CD4-positive, alpha-beta T cell (primary cell): ENCODE measurements at regions of chrX and their contacts with region 1.

Region 1: DNA sequence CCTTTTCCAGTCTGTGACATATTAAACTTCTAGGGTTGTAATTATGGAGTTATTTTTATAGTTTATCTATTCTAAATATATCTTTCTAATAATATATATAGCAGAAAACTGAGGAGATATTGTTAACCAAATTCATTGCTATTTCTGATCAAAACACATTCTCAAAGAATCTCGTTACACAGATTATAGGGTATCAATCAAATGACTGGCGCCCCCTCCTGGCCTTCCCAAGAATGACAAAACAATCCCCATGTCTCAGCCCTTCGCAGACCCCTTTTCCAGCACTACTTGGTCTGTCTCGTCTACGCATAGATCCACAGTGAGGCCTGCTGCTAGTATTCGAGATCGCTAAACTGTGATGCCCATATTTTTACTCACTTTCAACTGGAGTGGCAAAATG is 209.3 kb downstream of the GPC3 start:
- DNase-seq: peak; percentile 12 to 65 (median 30)
- ATAC-seq: no peak
- H3K4me3 ChIP-seq: no peak overlapping the region
- H3K4me3 Mint-ChIP-seq: no peak overlapping the region
- H3K27ac ChIP-seq: no peak overlapping the region
- H3K27ac Mint-ChIP-seq: no peak overlapping the region
- H3K4me1 ChIP-seq: no peaks in the 10 kb centered on the region
- H3K4me1 Mint-ChIP-seq: no peaks in the 10 kb centered on the region
- H3K27me3 ChIP-seq: no peaks in the 10 kb centered on the region
- H3K27me3 Mint-ChIP-seq: no peaks in the 10 kb centered on the region
- CTCF ChIP-seq: peak; percentile 58

Region 2: DNA sequence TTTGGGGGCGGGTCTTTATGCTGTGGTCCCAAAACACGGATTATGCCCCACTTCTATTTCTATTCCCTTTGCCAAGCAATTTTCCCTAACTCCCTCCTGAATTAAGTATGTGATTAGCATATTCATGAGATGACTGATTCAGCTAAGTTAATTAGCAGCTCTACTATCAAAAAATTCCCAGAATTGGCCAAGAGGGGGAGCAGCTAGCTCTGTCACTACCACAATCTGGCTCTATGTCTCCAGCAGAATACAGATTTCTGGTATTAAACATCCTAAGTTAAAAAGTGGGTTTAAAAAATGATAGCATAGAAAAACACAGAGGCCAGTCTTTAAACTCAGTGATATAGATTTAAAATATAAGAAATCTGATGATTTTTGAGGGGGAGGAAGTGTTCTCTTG is 441.0 kb before region 1 on chrX:
- CTCF ChIA-PET with region 1: no interaction called
- POLR2A ChIA-PET with region 1: no interaction called
- intact Hi-C with region 1: loop called in 1 of 2 experiments (anchors 10 kb)
- DNase-seq: peak in 3 of 14 experiments; percentile 5 to 13 (median 6)
- ATAC-seq: no peak
- H3K4me3 ChIP-seq: no peak overlapping the region
- H3K4me3 Mint-ChIP-seq: no peak overlapping the region
- H3K27ac ChIP-seq: no peak overlapping the region
- H3K27ac Mint-ChIP-seq: no peak overlapping the region
- H3K4me1 ChIP-seq: no peaks in the 10 kb centered on the region
- H3K4me1 Mint-ChIP-seq: no peaks in the 10 kb centered on the region
- H3K27me3 ChIP-seq: no peaks in the 10 kb centered on the region
- H3K27me3 Mint-ChIP-seq: no peaks in the 10 kb centered on the region
- CTCF ChIP-seq: no peak

Region 3: DNA sequence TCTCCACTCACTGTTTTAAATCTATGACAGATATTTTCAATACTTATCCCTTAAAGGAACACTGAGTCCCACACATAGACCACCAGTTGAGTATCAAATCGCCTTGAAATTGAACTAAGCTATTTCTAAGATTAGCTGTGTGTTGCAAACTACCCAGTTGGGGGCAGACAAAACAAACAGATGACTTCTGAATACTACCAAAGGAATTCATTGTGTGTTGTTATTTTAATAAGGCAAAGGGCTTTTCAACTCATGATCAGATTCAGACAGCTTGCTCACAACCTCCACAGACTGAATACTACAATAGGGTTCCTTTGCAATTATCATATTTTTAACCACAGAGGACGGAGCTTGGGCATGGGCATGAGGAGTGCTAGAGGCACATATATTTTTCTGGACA is 77.8 kb before region 1 on chrX:
- CTCF ChIA-PET with region 1: no interaction called
- POLR2A ChIA-PET with region 1: no interaction called
- intact Hi-C with region 1: loop called (anchors 1 to 2 kb)
- DNase-seq: peak in 3 of 14 experiments; percentile 1 to 14 (median 8)
- ATAC-seq: no peak
- H3K4me3 ChIP-seq: no peak overlapping the region
- H3K4me3 Mint-ChIP-seq: no peak overlapping the region
- H3K27ac ChIP-seq: no peak overlapping the region
- H3K27ac Mint-ChIP-seq: no peak overlapping the region
- H3K4me1 ChIP-seq: no peaks in the 10 kb centered on the region
- H3K4me1 Mint-ChIP-seq: no peaks in the 10 kb centered on the region
- H3K27me3 ChIP-seq: no peaks in the 10 kb centered on the region
- H3K27me3 Mint-ChIP-seq: no peaks in the 10 kb centered on the region
- CTCF ChIP-seq: no peak

Region 4: GRCh38 chrX:133745349-133745748 is 30.7 kb before region 1 on chrX:
- CTCF ChIA-PET with region 1: interaction called, 4 read pairs
- POLR2A ChIA-PET with region 1: interaction called, 6 read pairs
- intact Hi-C with region 1: loop called (anchors 1 to 2 kb)
- DNase-seq: peak in 7 of 14 experiments; percentile 12 to 54 (median 30)
- ATAC-seq: peak; percentile 75
- H3K4me3 ChIP-seq: no peak overlapping the region
- H3K4me3 Mint-ChIP-seq: peak overlapping the region; percentile 32
- H3K27ac ChIP-seq: no peak overlapping the region
- H3K27ac Mint-ChIP-seq: peak overlapping the region; percentile 82
- H3K4me1 ChIP-seq: peaks cover 8% of the 10 kb centered on the region
- H3K4me1 Mint-ChIP-seq: peaks cover 69% of the 10 kb centered on the region
- H3K27me3 ChIP-seq: no peaks in the 10 kb centered on the region
- H3K27me3 Mint-ChIP-seq: no peaks in the 10 kb centered on the region
- CTCF ChIP-seq: peak; percentile 35

Region 5: GRCh38 chrX:134171661-134172587 is 395.9 kb after region 1 on chrX:
- CTCF ChIA-PET with region 1: no interaction called
- POLR2A ChIA-PET with region 1: no interaction called
- intact Hi-C with region 1: no loop called
- DNase-seq: peak in 7 of 14 experiments; percentile 3 to 50 (median 31)
- ATAC-seq: peak; percentile 45
- H3K4me3 ChIP-seq: peak overlapping the region; percentile 62
- H3K4me3 Mint-ChIP-seq: peak overlapping the region; percentile 95
- H3K27ac ChIP-seq: no peak overlapping the region
- H3K27ac Mint-ChIP-seq: no peak overlapping the region
- H3K4me1 ChIP-seq: peaks cover 13% of the 10 kb centered on the region
- H3K4me1 Mint-ChIP-seq: peaks cover 14% of the 10 kb centered on the region
- H3K27me3 ChIP-seq: peaks cover 0 to 15% of the 10 kb centered on the region in 2 experiments
- H3K27me3 Mint-ChIP-seq: peaks cover 18% of the 10 kb centered on the region
- CTCF ChIP-seq: no peak

Region 6: DNA sequence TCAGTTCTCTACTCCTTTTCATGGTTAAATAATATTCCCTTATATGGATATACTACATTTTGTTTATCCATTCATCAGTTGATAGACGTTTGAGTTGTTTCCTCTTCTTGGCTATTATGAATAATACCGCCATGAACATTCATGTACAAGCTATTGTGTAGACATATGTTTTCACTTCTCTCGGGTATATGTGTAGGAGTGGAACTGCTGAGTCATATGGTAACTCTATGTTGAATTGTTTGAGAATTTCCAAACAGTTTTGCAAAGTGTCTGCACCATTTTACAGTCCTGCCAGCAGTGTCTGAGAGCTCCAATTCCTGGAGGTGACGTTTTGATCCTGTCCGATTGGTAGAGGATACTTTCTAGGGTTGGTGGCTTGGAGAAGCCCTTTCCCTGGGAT is 858.6 kb after region 1 on chrX:
- CTCF ChIA-PET with region 1: no interaction called
- POLR2A ChIA-PET with region 1: no interaction called
- intact Hi-C with region 1: no loop called
- DNase-seq: no peak
- ATAC-seq: no peak
- H3K4me3 ChIP-seq: no peak overlapping the region
- H3K4me3 Mint-ChIP-seq: no peak overlapping the region
- H3K27ac ChIP-seq: no peak overlapping the region
- H3K27ac Mint-ChIP-seq: no peak overlapping the region
- H3K4me1 ChIP-seq: no peaks in the 10 kb centered on the region
- H3K4me1 Mint-ChIP-seq: no peaks in the 10 kb centered on the region
- H3K27me3 ChIP-seq: no peaks in the 10 kb centered on the region
- H3K27me3 Mint-ChIP-seq: no peaks in the 10 kb centered on the region
- CTCF ChIP-seq: no peak